ENCODE measurements at regions of chr17 and their contacts with region 1.

Region 1: GRCh38 chr17:11391134-11391533 is 150.1 kb downstream of the SHISA6 start:
- DNase-seq: no peak

Region 2: DNA sequence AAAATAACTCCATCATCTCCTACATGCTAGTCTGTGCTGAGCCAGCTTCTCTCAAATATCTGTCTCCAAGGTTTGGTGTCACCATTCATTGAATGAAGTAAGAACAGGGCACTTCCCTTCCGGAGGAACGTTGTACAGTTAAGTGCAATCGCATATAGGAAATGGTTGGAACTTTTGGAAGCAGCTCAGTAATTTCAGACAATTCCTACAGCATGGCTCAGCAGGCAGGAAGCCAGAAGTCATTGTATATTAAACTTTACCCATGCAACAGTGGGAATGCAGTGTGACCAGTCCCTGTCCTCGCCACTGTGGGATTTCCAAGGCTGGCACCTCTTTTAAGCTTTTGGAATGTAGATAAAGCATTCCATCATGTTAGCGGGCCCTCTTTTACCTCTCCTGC is 790.6 kb before region 1 on chr17:
- intact Hi-C with region 1: loop called in 1 of 2 experiments (anchors 10 kb)
- DNase-seq: no peak

Region 3: DNA sequence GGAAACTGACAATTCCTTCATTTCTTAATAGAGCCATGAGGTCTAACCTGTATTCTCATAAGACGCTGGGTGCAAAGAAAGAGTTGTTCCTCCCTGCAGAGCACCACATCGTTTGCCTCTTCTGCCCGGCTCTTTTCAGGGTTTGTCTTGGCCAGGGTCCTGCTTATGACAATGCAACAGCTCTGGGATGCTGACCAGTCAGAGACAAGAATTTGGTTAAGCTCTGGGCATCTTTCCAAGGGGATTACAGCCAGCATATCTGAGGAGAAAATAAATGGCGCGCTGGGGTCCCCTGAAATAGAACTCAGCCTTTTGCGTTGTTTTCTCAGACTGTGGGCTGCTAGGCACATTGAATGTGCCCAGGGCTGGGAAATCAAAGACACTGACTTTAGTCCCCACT is 21.6 kb before region 1 on chr17:
- intact Hi-C with region 1: no loop called
- DNase-seq: no peak

Region 4: GRCh38 chr17:11412654-11413053 is 21.5 kb after region 1 on chr17:
- intact Hi-C with region 1: no loop called
- DNase-seq: no peak

Region 5: GRCh38 chr17:11495613-11496012 is 104.5 kb after region 1 on chr17:
- intact Hi-C with region 1: no loop called
- DNase-seq: no peak